Heart left ventricle (tissue), 16 donors: ENCODE measurements at regions of chr11 and their contacts with region 1.

Region 1: GRCh38 chr11:6596239-6596877 is 7.1 kb downstream of the RRP8 start:
- DNase-seq: no peak
- ATAC-seq: peak; percentile 44 to 71 (median 63)
- H3K4me3 ChIP-seq: no peak overlapping the region
- H3K27ac ChIP-seq: peak overlapping the region; percentile 37 to 83 (median 60)
- H3K4me1 ChIP-seq: peaks cover 6 to 81% (median 57%) of the 10 kb centered on the region in 12 donors
- H3K27me3 ChIP-seq: no peaks in the 10 kb centered on the region
- CTCF ChIP-seq: no peak
- POLR2A ChIP-seq: no peak

Region 2: GRCh38 chr11:6531267-6531752 is 65.0 kb before region 1 on chr11:
- intact Hi-C with region 1: loop called in 5 of 10 experiments (anchors 5 to 10 kb)
- DNase-seq: no peak
- ATAC-seq: peak in 3 of 4 donors; percentile 49 to 55 (median 54)
- H3K4me3 ChIP-seq: no peak overlapping the region
- H3K27ac ChIP-seq: no peak overlapping the region
- H3K4me1 ChIP-seq: no peaks in the 10 kb centered on the region
- H3K27me3 ChIP-seq: no peaks in the 10 kb centered on the region
- CTCF ChIP-seq: peak; percentile 65 to 86 (median 79)
- POLR2A ChIP-seq: no peak

Region 3: DNA sequence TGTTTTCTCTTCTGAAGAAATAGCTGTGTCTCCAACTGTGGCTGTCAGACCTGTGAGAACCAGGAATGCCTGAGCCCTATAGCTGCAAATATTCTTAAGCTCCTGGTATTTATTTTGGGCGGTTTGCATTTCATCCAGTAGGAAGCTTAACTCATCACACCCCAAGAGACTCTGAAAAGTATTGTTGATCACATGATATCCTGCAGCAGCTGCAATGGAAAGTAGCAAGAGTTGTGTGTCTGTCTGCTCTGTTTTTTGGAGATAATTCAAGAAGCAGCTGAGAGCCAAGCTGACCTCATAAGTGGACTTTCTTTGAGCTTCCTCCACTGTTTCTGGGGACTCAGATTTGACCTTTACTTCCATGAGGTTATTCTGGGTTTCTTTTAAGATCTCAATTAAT is 123.2 kb after region 1 on chr11:
- intact Hi-C with region 1: no loop called
- DNase-seq: no peak
- ATAC-seq: peak in 3 of 4 donors; percentile 20 to 56 (median 54)
- H3K4me3 ChIP-seq: no peak overlapping the region
- H3K27ac ChIP-seq: no peak overlapping the region
- H3K4me1 ChIP-seq: peaks cover 0 to 32% (median 0%) of the 10 kb centered on the region in 12 donors
- H3K27me3 ChIP-seq: no peaks in the 10 kb centered on the region
- CTCF ChIP-seq: no peak
- POLR2A ChIP-seq: no peak

Region 4: DNA sequence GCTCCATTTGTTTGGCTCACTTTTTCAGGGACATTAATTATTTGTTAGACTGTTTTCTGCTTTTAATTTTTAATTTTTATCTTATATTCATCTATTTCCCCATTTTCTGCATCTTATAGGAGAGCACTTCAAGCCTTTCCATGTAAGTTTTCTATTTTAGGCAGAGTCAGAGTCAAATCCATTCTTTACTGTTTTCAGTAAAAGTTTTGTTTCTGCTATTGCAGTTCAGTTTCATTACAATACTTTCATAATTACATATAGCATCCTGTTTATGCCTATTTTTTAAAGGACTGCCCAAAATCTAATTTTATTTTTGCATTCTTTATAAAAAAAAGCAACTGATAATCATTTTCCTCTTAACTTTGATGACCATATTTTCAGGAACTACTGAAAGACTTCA is 245.3 kb after region 1 on chr11:
- intact Hi-C with region 1: no loop called
- DNase-seq: no peak
- ATAC-seq: no peak
- H3K4me3 ChIP-seq: no peak overlapping the region
- H3K27ac ChIP-seq: no peak overlapping the region
- H3K4me1 ChIP-seq: no peaks in the 10 kb centered on the region
- H3K27me3 ChIP-seq: peaks cover 0 to 3% (median 0%) of the 10 kb centered on the region in 9 donors
- CTCF ChIP-seq: no peak
- POLR2A ChIP-seq: no peak